ENCODE measurements at regions of chr2 and their contacts with region 1.

Region 1: DNA sequence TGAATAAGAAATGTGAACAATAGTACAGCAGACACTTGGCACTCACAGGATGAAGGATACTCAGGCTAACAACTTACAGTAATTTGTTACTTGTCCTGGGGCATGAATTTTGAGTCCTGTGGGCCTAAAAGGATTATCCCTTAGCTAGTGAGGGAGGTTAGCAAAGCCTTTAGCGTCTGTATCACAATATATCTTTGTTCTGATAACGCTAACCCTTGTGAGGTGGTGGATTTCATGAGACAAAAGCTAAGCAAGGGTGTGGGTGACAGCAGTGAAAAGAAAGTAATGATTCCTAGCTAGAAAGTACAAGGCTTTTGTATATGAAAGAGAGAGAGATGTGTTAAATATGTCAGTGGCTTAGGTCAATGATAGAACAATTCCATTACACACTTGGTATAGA is 46.8 kb upstream of the TTC21B start:
- DNase-seq: no peak
- ATAC-seq: no peak
- H3K4me3 ChIP-seq: no peak overlapping the region
- H3K4me3 Mint-ChIP-seq: no peak overlapping the region
- H3K27ac ChIP-seq: no peak overlapping the region
- H3K27ac Mint-ChIP-seq: no peak overlapping the region
- H3K4me1 ChIP-seq: no peaks in the 10 kb centered on the region
- H3K4me1 Mint-ChIP-seq: no peaks in the 10 kb centered on the region
- H3K27me3 ChIP-seq: no peaks in the 10 kb centered on the region
- H3K27me3 Mint-ChIP-seq: peaks cover 4 to 17% of the 10 kb centered on the region in 2 donors

Region 2: GRCh38 chr2:165182029-165182428 is 818.4 kb before region 1 on chr2:
- CTCF ChIA-PET with region 1: interaction called in 1 of 2 experiments, 12 read pairs
- POLR2A ChIA-PET with region 1: no interaction called
- DNase-seq: no peak
- ATAC-seq: no peak
- H3K4me3 ChIP-seq: no peak overlapping the region
- H3K4me3 Mint-ChIP-seq: no peak overlapping the region
- H3K27ac ChIP-seq: no peak overlapping the region
- H3K27ac Mint-ChIP-seq: no peak overlapping the region
- H3K4me1 ChIP-seq: no peaks in the 10 kb centered on the region
- H3K4me1 Mint-ChIP-seq: no peaks in the 10 kb centered on the region
- H3K27me3 ChIP-seq: no peaks in the 10 kb centered on the region
- H3K27me3 Mint-ChIP-seq: no peaks in the 10 kb centered on the region

Region 3: GRCh38 chr2:166932032-166932431 is 931.6 kb after region 1 on chr2:
- CTCF ChIA-PET with region 1: no interaction called
- POLR2A ChIA-PET with region 1: interaction called in 1 of 2 experiments, 10 read pairs
- DNase-seq: no peak
- ATAC-seq: no peak
- H3K4me3 ChIP-seq: no peak overlapping the region
- H3K4me3 Mint-ChIP-seq: no peak overlapping the region
- H3K27ac ChIP-seq: no peak overlapping the region
- H3K27ac Mint-ChIP-seq: no peak overlapping the region
- H3K4me1 ChIP-seq: no peaks in the 10 kb centered on the region
- H3K4me1 Mint-ChIP-seq: no peaks in the 10 kb centered on the region
- H3K27me3 ChIP-seq: no peaks in the 10 kb centered on the region
- H3K27me3 Mint-ChIP-seq: no peaks in the 10 kb centered on the region